Naive thymus-derived CD4-positive, alpha-beta T cell (primary cell): ENCODE measurements at regions of chr1 and their contacts with region 1.

Region 1: DNA sequence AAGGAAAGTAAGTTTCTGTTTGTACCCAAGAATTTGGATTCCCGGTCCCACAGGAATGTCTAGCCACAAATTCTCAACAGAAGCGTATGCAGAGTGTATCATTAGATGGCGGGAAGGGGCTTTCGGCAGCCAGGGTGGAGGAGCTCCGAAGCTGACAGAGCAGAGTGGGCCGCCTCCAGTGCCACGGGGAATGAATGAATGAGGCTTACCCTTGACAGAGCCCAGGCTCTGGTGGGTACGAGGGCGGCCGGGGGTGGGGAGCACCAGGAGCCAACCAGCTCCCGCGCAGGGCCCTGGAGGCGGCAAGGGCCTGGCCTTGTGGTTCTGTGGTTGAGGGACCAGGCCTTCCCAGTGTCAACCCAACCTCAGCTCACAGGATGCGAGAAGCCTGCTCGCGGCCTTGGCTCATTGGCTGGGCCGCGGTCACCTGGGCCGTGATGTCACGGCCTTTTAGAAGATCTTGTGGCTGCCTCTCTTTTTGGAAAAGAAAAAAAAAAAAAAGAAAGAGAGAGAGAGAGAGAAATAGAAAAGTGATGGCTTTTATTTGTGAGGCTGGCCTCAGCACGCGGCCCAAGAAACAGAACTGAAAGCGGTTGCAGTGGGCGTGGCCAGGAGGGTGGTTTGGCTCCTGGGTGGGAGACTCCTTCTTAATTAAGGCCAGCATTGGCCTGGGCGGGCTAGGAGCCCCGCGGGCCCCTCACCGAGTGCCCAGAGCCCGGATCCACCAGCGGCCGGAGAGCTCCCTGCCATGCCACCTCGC is 34.9 kb upstream of the RUNX3 start:
- DNase-seq: peak; percentile 62 to 94 (median 88)
- ATAC-seq: peak; percentile 96
- H3K4me3 ChIP-seq: peak overlapping the region; percentile 65
- H3K4me3 Mint-ChIP-seq: peak overlapping the region; percentile 74 to 92 (median 83)
- H3K27ac ChIP-seq: peak overlapping the region; percentile 74
- H3K27ac Mint-ChIP-seq: peak overlapping the region; percentile 89 to 97 (median 95)
- H3K4me1 ChIP-seq: peaks cover 30 to 39% of the 10 kb centered on the region in 2 donors
- H3K4me1 Mint-ChIP-seq: peaks cover 36 to 85% (median 69%) of the 10 kb centered on the region in 7 donors
- H3K27me3 ChIP-seq: no peaks in the 10 kb centered on the region
- H3K27me3 Mint-ChIP-seq: peaks cover 0 to 3% (median 0%) of the 10 kb centered on the region in 5 donors

Region 2: DNA sequence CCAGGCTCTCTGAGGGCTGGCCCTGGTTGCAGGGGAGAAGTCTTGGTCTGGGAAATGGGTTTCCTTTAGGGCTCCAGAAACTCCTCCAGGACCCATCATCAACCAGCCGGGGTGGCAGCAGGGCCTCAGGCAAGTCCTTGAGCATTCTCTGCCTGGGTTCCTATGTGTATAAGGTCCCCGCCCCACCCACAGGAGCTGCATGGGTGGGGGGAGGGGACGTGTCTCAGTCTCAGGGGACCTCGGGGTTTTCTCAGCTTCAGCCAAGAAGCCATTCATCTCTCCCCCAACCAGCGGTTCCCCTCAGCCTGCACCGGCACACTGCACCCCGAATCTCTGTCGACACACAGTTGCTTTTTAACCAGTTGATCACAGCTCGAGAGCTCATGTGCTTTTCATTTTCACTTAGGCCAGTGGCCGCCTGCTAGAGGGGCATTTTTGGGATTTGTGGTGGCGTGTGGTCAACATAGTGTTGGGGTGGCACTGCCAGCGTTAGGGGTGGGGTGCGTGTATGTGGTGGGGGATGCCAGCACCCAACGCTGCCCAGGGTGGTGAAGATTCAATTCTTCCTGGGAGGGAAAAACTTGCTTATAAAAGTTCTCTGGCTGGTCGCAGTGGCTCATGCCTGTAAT is 41.4 kb before region 1 on chr1:
- CTCF ChIA-PET with region 1: interaction called, 3 read pairs
- POLR2A ChIA-PET with region 1: interaction called, 18 read pairs
- intact Hi-C with region 1: loop called in 1 of 2 experiments (anchors 2 kb)
- DNase-seq: no peak
- ATAC-seq: no peak
- H3K4me3 ChIP-seq: peak overlapping the region; percentile 29
- H3K4me3 Mint-ChIP-seq: peak overlapping the region in 7 of 10 donors; percentile 6 to 68 (median 53)
- H3K27ac ChIP-seq: peak overlapping the region; percentile 61
- H3K27ac Mint-ChIP-seq: peak overlapping the region; percentile 38 to 81 (median 54)
- H3K4me1 ChIP-seq: peaks cover 49 to 84% of the 10 kb centered on the region in 2 donors
- H3K4me1 Mint-ChIP-seq: peaks cover 45 to 85% (median 73%) of the 10 kb centered on the region in 7 donors
- H3K27me3 ChIP-seq: no peaks in the 10 kb centered on the region
- H3K27me3 Mint-ChIP-seq: no peaks in the 10 kb centered on the region

Region 3: GRCh38 chr1:24987875-24988557 is 23.0 kb after region 1 on chr1:
- CTCF ChIA-PET with region 1: interaction called, 5 read pairs
- POLR2A ChIA-PET with region 1: interaction called, 58 read pairs
- intact Hi-C with region 1: loop called (anchors 1 to 2 kb)
- DNase-seq: no peak
- ATAC-seq: peak; percentile 78
- H3K4me3 ChIP-seq: no peak overlapping the region
- H3K4me3 Mint-ChIP-seq: peak overlapping the region in 8 of 10 donors; percentile 6 to 80 (median 58)
- H3K27ac ChIP-seq: no peak overlapping the region
- H3K27ac Mint-ChIP-seq: peak overlapping the region; percentile 49 to 100 (median 81)
- H3K4me1 ChIP-seq: peaks cover 66 to 96% of the 10 kb centered on the region in 2 donors
- H3K4me1 Mint-ChIP-seq: peaks cover 78 to 99% (median 92%) of the 10 kb centered on the region in 7 donors
- H3K27me3 ChIP-seq: no peaks in the 10 kb centered on the region
- H3K27me3 Mint-ChIP-seq: peaks cover 0 to 10% (median 0%) of the 10 kb centered on the region in 5 donors

Region 4: DNA sequence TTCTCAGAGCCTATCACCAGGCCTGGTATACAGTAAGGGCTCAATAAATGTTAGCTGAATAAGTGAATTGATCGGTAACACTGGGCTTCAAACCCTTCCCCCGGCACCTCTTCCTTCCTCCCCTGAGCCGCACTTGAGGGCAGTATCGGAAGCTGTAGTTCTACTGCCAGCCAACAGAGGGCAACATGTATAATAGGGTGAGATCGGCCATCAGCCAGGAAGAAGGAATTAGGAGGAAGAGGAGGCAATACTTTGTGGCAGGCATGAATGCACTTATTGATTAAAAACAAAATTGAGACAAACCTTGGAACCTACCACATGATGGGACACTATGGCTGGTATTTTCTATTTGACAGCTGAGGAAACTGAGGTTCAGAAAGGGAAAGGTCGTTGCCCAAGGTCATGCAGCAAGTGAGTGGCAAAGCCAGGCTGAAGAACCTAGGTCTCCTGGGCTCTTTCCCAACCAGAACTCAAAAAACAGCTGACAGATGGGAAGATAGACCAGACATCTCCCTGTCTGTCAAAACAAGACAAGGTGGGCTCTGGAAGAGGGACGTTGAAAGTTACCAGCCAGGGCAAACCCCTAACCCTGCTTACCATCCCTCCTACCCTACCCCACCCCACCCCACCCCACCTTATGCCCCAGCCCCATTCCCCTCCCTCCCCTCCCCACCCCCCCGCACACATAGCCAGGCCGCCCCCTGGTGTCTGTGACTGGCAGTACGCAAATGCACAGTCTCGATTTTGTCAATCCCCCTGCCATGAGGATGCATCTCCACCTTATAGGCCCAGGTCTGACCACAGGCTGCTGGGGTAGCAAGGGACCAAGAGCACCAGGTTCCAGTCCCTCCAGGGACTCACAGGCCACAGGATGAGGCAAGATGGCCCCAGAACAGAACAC is 72.4 kb after region 1 on chr1:
- CTCF ChIA-PET with region 1: interaction called, 61 read pairs
- POLR2A ChIA-PET with region 1: interaction called, 12 read pairs
- intact Hi-C with region 1: loop called (anchors 1 kb)
- DNase-seq: peak; percentile 39 to 70 (median 56)
- ATAC-seq: peak; percentile 58
- H3K4me3 ChIP-seq: no peak overlapping the region
- H3K4me3 Mint-ChIP-seq: peak overlapping the region in 9 of 10 donors; percentile 1 to 44 (median 17)
- H3K27ac ChIP-seq: no peak overlapping the region
- H3K27ac Mint-ChIP-seq: peak overlapping the region in 8 of 9 donors; percentile 34 to 74 (median 54)
- H3K4me1 ChIP-seq: peaks cover 43 to 57% of the 10 kb centered on the region in 2 donors
- H3K4me1 Mint-ChIP-seq: peaks cover 28 to 42% (median 33%) of the 10 kb centered on the region in 7 donors
- H3K27me3 ChIP-seq: no peaks in the 10 kb centered on the region
- H3K27me3 Mint-ChIP-seq: peaks cover 0 to 12% (median 0%) of the 10 kb centered on the region in 5 donors

Region 5: DNA sequence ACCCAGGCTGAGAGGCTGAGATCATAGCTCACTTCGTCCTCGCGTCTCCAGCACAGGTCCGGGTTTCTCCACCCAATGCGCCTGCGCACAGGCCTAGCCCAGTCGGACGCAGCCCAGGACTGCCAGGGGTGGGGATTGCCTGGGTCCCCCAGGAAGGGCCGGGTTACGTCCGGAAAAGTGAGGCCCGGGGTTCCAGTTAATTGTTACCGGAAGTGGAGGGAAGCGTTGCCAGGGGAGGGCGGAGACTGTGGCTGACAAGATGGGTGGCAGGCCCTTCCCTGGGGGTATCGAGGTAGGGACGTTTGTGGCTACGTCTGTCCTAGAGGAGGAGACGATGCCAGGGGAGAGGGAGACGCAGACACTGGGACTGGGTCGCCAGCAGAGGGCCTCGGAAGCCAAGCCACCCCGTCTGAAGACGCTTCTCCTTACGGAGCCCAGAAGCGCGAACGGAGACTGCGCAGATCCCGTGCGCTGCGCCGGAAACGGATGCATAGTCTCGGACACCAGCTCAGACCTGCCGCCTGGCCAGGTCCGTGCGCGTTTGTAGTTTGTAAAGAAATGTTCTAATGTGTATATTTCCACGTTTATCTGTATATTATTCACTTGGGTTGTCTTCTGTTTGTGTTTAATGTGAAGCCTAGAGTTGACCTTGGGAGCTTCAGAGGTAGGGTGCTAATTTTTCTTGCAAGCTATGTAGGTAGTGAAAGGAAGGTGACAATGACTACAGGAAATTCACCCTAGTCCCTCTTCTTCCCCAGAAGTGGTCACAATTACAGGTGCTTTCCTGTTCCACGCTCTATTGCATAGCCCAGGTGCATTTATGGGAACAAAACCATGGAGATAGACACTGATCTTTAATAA is 274.9 kb after region 1 on chr1:
- CTCF ChIA-PET with region 1: no interaction called
- POLR2A ChIA-PET with region 1: no interaction called
- intact Hi-C with region 1: loop called in 1 of 2 experiments (anchors 10 kb)
- DNase-seq: peak; percentile 72 to 91 (median 79)
- ATAC-seq: peak; percentile 92
- H3K4me3 ChIP-seq: peak overlapping the region; percentile 28
- H3K4me3 Mint-ChIP-seq: peak overlapping the region; percentile 87 to 93 (median 91)
- H3K27ac ChIP-seq: peak overlapping the region; percentile 80
- H3K27ac Mint-ChIP-seq: peak overlapping the region; percentile 89 to 98 (median 97)
- H3K4me1 ChIP-seq: peaks cover 33 to 37% of the 10 kb centered on the region in 2 donors
- H3K4me1 Mint-ChIP-seq: peaks cover 23 to 74% (median 63%) of the 10 kb centered on the region in 7 donors
- H3K27me3 ChIP-seq: no peaks in the 10 kb centered on the region
- H3K27me3 Mint-ChIP-seq: no peaks in the 10 kb centered on the region